ENCODE measurements at regions of chr6 and their contacts with region 1.

Region 1: DNA sequence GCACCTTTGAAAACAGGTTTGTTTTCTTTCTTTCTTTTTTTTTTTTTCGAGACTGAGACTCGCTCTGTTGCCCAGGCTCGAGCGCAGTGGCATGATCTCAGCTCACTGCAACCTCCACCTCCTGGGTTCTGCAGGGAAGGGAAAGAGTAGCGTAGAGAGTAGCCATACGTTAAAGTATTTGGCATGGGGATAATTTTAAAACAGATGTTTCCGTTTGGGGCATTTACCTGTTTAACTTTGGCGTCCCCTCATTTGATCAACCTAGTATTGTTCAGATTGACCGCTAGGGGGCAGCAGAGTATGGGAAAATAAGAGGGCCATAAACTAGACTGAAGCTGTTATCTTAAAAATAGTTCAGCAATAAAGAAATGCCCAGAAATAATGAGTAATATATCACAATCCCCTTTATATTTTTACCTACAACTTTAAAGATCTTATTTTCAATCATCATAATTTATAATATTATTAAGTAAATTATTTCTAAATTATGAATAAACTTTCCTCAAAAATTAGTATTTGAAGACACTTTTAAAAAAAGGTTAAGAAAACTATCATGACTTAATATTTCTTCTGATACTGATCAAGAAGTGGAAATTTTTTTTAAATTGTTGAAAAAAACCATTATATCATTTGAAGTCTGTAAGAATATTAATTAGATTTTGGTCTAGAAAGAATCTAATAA is 7.6 kb upstream of the TAAR9 start:
- DNase-seq: peak; percentile 55 to 73
- H3K4me3 ChIP-seq: peak overlapping the region; percentile 41; the same call in 1 of the 2 replicates
- H3K27ac ChIP-seq: no peak overlapping the region
- H3K4me1 ChIP-seq: no peaks in the 10 kb centered on the region
- H3K27me3 ChIP-seq: no peaks in the 10 kb centered on the region
- CTCF ChIP-seq: peak; percentile 96

Region 2: DNA sequence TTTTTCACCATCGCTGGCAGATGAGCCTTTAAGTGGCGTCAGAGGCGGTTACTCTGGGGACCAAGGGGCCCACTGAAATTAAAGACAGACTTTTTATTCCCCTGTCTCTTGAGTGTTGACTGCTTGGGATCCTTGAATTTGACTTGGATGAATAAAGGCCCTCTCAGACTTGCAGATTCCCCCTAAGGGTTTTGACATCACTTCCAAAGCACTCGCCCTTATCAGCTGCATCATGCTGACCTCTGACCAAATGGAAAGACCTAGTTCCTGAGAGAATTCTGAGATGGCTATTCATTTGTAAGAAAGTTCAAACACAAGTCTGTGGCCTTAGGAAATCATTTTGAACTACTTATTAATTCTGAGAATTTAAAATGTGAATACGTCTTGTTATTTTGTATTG is 115.7 kb before region 1 on chr6:
- CTCF ChIA-PET with region 1: no interaction called
- POLR2A ChIA-PET with region 1: no interaction called
- intact Hi-C with region 1: no loop called
- DNase-seq: no peak
- H3K4me3 ChIP-seq: no peak overlapping the region
- H3K27ac ChIP-seq: no peak overlapping the region
- H3K4me1 ChIP-seq: 0 out of 2 replicates have a peak, but pooled peaks cover 3% of the 10 kb centered on the region
- H3K27me3 ChIP-seq: no peaks in the 10 kb centered on the region
- CTCF ChIP-seq: no peak

Region 3: DNA sequence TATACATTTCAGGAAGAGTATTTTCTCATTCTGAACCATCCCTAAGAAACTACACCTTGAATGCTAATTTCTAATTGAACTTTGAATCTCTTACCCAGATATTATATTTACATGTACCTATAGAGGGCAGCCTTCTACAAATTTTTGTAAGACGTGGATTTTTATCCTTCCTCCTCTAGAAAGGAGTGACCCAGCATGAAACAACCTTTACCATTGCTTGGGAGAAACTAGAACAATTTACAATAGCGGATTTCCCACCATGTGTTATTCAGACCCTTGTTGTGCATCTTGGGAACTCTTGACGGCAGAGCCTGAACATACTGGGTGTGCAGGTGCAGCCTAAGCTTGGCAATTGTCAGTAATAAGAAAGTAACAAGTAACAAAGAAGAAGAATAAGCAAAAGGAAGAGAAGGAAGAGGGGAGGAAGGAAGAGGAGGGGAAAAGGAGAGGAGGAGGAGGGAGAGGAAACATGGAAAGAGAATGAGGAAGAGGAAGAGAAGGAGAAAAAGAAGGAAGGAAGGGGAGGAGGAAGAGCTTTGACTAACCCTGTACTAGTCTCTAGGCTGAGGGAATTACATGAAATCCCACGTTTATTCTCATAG is 139.4 kb after region 1 on chr6:
- CTCF ChIA-PET with region 1: no interaction called
- POLR2A ChIA-PET with region 1: no interaction called
- intact Hi-C with region 1: loop called (anchors 2 kb)
- DNase-seq: peak; percentile 19 to 63
- H3K4me3 ChIP-seq: no peak overlapping the region
- H3K27ac ChIP-seq: no peak overlapping the region
- H3K4me1 ChIP-seq: peaks cover 28% of the 10 kb centered on the region
- H3K27me3 ChIP-seq: no peaks in the 10 kb centered on the region
- CTCF ChIP-seq: peak; percentile 84

Region 4: DNA sequence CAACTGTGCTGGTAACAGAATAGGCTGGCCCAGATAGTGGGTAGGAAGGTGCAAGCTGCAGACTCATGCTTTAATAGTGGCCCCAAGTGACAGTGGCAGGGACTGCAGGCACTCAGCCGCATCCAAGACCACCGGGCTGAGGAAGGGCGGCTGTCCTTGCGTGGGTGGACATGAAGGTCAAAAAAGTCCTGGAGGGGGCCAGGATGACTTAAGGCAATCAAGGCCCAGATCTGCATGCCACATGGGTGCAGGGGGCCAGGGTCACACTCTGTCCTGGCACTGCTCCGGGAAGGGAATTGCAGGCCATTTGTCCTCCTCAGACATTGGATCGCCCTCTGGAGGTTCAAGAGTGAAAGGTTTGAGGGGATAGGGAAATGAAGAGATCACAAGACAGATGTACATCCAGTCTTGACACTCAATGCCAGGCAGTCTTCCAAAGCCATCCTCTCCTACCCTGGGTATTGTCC is 237.7 kb after region 1 on chr6:
- CTCF ChIA-PET with region 1: interaction called, 3 read pairs
- POLR2A ChIA-PET with region 1: no interaction called
- intact Hi-C with region 1: loop called (anchors 1 kb)
- DNase-seq: peak in 1 of 2 experiments; percentile 15
- H3K4me3 ChIP-seq: no peak overlapping the region
- H3K27ac ChIP-seq: no peak overlapping the region
- H3K4me1 ChIP-seq: peaks cover 17% of the 10 kb centered on the region
- H3K27me3 ChIP-seq: no peaks in the 10 kb centered on the region
- CTCF ChIP-seq: peak; percentile 71

Region 5: GRCh38 chr6:132780770-132781371 is 250.4 kb after region 1 on chr6:
- CTCF ChIA-PET with region 1: no interaction called
- POLR2A ChIA-PET with region 1: no interaction called
- intact Hi-C with region 1: loop called (anchors 5 kb)
- DNase-seq: no peak
- H3K4me3 ChIP-seq: no peak overlapping the region
- H3K27ac ChIP-seq: no peak overlapping the region
- H3K4me1 ChIP-seq: no peaks in the 10 kb centered on the region
- H3K27me3 ChIP-seq: no peaks in the 10 kb centered on the region
- CTCF ChIP-seq: peak; percentile 73

Region 6: GRCh38 chr6:132813173-132813856 is 282.9 kb after region 1 on chr6:
- CTCF ChIA-PET with region 1: no interaction called
- POLR2A ChIA-PET with region 1: no interaction called
- intact Hi-C with region 1: loop called (anchors 5 kb)
- DNase-seq: peak in 1 of 2 experiments; percentile 59
- H3K4me3 ChIP-seq: peak overlapping the region; percentile 84
- H3K27ac ChIP-seq: peak overlapping the region; percentile 89
- H3K4me1 ChIP-seq: peaks cover 36% of the 10 kb centered on the region
- H3K27me3 ChIP-seq: no peaks in the 10 kb centered on the region
- CTCF ChIP-seq: no peak

Region 7: DNA sequence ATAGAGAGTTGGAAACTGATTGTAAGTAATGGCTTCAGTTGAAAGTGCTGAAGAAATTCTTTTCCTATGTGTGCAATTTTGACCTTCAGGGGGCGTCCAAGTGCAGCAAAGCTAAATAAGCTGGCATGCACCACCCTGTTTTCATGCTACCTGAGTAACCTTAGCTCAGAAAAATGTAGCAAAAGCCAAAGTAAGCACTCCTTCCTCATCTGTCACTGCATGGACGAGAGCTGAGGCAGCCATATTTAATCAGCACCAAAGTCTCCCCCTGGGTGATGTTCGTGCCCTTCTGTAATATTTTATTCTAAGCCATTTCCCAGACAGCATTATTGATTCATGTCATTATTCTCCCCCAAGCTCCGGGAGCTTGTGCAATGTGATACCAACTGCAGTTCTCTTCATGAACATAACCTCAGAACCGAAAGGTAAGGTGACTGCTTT is 407.1 kb after region 1 on chr6:
- CTCF ChIA-PET with region 1: no interaction called
- POLR2A ChIA-PET with region 1: no interaction called
- intact Hi-C with region 1: loop called (anchors 10 kb)
- DNase-seq: peak in 1 of 2 experiments; percentile 56
- H3K4me3 ChIP-seq: no peak overlapping the region
- H3K27ac ChIP-seq: no peak overlapping the region
- H3K4me1 ChIP-seq: no peaks in the 10 kb centered on the region
- H3K27me3 ChIP-seq: no peaks in the 10 kb centered on the region
- CTCF ChIP-seq: peak; percentile 74

Region 8: DNA sequence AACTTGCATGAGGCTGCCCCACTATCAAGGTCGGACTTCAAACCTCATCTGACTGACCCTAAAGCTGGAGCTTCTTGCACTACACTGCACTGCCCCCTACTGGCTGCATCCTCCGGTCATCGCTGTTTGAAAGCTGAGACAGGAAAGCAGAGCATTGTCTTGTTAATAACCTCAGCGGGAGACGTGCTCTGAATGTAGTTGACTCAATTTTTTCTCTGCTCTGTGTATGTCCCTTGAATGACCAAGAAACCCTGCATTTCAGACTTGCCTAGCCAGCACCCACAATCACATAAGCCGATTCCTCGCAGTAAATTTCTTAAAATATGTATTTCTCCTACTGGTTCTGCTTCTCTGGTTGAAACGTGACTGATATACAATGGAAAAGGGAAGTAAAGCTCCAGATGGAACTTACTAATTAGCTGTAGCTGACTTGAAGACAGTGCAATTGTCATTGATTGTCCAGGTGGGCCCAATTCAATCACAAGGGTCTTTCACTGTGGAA is 1386.3 kb after region 1 on chr6:
- CTCF ChIA-PET with region 1: no interaction called
- POLR2A ChIA-PET with region 1: no interaction called
- intact Hi-C with region 1: loop called (anchors 10 kb)
- DNase-seq: peak; percentile 71 to 82
- H3K4me3 ChIP-seq: peak overlapping the region; percentile 6; the same call in 1 of the 2 replicates
- H3K27ac ChIP-seq: no peak overlapping the region
- H3K4me1 ChIP-seq: no peaks in the 10 kb centered on the region
- H3K27me3 ChIP-seq: no peaks in the 10 kb centered on the region
- CTCF ChIP-seq: peak; percentile 100

Measured in PC-9 (cell line).